Dendritic cell treated with granulocyte-macrophage colony-stimulating factor and Interleukin-4, amounts not matched to agents 40 ng/mL and 50 ng/mL, for 4 days (primary cell): ENCODE measurements at regions of chr6 and their contacts with region 1.

Region 1: GRCh38 chr6:108113557-108114519 is 39.3 kb upstream of the OSTM1 start:
- H3K4me3 Mint-ChIP-seq: peak overlapping the region; percentile 67
- H3K27ac Mint-ChIP-seq: peak overlapping the region; percentile 20
- H3K4me1 Mint-ChIP-seq: peaks cover 47% of the 10 kb centered on the region
- H3K27me3 Mint-ChIP-seq: peaks cover 82% of the 10 kb centered on the region

Region 2: GRCh38 chr6:108074359-108075144 is 39.3 kb before region 1 on chr6 and contains the start of gene OSTM1:
- intact Hi-C with region 1: loop called (anchors 5 kb)
- H3K4me3 Mint-ChIP-seq: peak within 1 kb of the TSS; percentile 80
- H3K27ac Mint-ChIP-seq: peak within 1 kb of the TSS; percentile 85
- H3K4me1 Mint-ChIP-seq: peaks cover 16% of the 10 kb centered on the region
- H3K27me3 Mint-ChIP-seq: peaks cover 9% of the 10 kb centered on the region

Region 3: GRCh38 chr6:108168501-108169463 is 54.9 kb after region 1 on chr6:
- intact Hi-C with region 1: loop called (anchors 5 kb)
- H3K4me3 Mint-ChIP-seq: peak overlapping the region; percentile 60
- H3K27ac Mint-ChIP-seq: no peak overlapping the region
- H3K4me1 Mint-ChIP-seq: peaks cover 69% of the 10 kb centered on the region
- H3K27me3 Mint-ChIP-seq: peaks cover 94% of the 10 kb centered on the region

Region 4: GRCh38 chr6:108260809-108261569 is 147.2 kb after region 1 on chr6 and contains the start of gene SNX3:
- intact Hi-C with region 1: loop called (anchors 2 kb)
- H3K4me3 Mint-ChIP-seq: peak within 1 kb of the TSS; percentile 90
- H3K27ac Mint-ChIP-seq: peak within 1 kb of the TSS; percentile 90
- H3K4me1 Mint-ChIP-seq: peaks cover 10% of the 10 kb centered on the region
- H3K27me3 Mint-ChIP-seq: no peaks in the 10 kb centered on the region

Region 5: GRCh38 chr6:108492131-108492766 is 378.4 kb after region 1 on chr6:
- intact Hi-C with region 1: loop called (anchors 2 kb)
- H3K4me3 Mint-ChIP-seq: no peak overlapping the region
- H3K27ac Mint-ChIP-seq: no peak overlapping the region
- H3K4me1 Mint-ChIP-seq: no peaks in the 10 kb centered on the region
- H3K27me3 Mint-ChIP-seq: no peaks in the 10 kb centered on the region

Region 6: DNA sequence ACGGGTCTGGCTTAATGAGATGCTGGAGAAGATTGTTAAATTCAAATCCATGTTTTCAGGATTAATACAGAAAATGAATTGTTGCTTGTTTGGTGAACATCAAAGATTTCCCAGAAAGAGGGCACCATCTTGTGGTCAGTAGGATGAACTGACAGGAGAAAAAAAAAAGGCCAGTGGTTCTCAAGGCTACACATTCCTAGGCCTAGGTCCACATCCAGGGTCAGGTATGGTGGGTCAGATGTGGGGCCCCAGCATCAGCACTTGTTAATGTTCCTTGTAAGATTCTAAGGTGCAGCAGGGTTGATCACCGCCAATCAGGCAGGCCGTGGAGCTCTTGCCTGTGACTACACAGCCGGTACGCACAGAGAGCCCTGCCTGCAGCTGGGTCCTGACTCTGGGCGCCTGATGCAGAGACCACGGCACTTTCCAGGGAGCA is 412.9 kb after region 1 on chr6:
- intact Hi-C with region 1: loop called (anchors 1 kb)
- H3K4me3 Mint-ChIP-seq: no peak overlapping the region
- H3K27ac Mint-ChIP-seq: no peak overlapping the region
- H3K4me1 Mint-ChIP-seq: no peaks in the 10 kb centered on the region
- H3K27me3 Mint-ChIP-seq: no peaks in the 10 kb centered on the region